Activated CD8-positive, alpha-beta memory T cell treated with anti-CD3 and anti-CD28 coated beads, Interleukin-2, amount 10 ng/mL, durations not matched to agents 7 days and 5 days (primary cell): ENCODE measurements at regions of chr17 and their contacts with region 1.

Region 1: GRCh38 chr17:27332485-27333409 is 38.8 kb downstream of the WSB1 start:
- DNase-seq: peak; percentile 95
- ATAC-seq: peak; percentile 96
- H3K4me3 Mint-ChIP-seq: peak overlapping the region; percentile 76
- H3K27ac Mint-ChIP-seq: peak overlapping the region; percentile 79
- H3K4me1 Mint-ChIP-seq: peaks cover 28% of the 10 kb centered on the region
- H3K27me3 Mint-ChIP-seq: no peaks in the 10 kb centered on the region

Region 2: GRCh38 chr17:27245230-27245696 is 87.5 kb before region 1 on chr17:
- CTCF ChIA-PET with region 1: interaction called, 23 read pairs
- DNase-seq: peak; percentile 72
- ATAC-seq: peak; percentile 82
- H3K4me3 Mint-ChIP-seq: no peak overlapping the region
- H3K27ac Mint-ChIP-seq: no peak overlapping the region
- H3K4me1 Mint-ChIP-seq: peaks cover 33% of the 10 kb centered on the region
- H3K27me3 Mint-ChIP-seq: peaks cover 19% of the 10 kb centered on the region

Region 3: DNA sequence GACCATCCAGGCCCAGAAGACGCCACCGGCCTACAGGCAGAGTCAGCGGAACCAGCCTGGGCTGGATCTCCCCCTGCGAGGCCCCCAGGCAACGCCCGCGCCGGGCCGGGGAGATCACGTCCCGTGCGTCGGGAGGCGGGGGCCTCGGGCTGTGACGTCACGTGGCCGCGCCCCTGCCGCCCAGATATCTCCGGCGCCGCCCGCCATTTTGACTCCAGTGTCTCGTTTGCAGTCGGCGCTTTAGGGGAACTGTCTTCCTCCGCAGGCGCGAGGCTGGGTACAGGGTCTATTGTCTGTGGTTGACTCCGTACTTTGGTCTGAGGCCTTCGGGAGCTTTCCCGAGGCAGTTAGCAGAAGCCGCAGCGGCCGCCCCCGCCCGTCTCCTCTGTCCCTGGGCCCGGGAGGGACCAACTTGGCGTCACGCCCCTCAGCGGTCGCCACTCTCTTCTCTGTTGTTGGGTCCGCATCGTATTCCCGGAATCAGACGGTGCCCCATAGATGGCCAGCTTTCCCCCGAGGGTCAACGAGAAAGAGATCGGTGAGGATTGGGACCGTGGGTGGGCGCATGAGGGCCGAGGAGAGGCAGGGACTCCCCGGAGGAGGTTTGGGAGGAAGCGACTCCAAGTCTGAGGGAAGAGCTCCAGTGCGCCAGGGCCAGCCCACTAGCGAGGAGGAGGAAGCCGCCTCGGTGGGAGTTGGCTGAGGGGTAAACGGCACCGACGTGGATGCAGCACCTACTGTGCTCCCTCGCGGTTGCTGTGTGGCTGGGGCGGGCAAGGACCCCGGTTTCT is 38.7 kb before region 1 on chr17 and contains the start of gene WSB1:
- CTCF ChIA-PET with region 1: interaction called, 20 read pairs
- DNase-seq: peak; percentile 93
- ATAC-seq: peak; percentile 88
- H3K4me3 Mint-ChIP-seq: peak within 1 kb of the TSS; percentile 93
- H3K27ac Mint-ChIP-seq: peak within 1 kb of the TSS; percentile 99
- H3K4me1 Mint-ChIP-seq: peaks cover 35% of the 10 kb centered on the region
- H3K27me3 Mint-ChIP-seq: no peaks in the 10 kb centered on the region
- total RNA-seq, gene WSB1: 109 to 177 TPM

Region 4: DNA sequence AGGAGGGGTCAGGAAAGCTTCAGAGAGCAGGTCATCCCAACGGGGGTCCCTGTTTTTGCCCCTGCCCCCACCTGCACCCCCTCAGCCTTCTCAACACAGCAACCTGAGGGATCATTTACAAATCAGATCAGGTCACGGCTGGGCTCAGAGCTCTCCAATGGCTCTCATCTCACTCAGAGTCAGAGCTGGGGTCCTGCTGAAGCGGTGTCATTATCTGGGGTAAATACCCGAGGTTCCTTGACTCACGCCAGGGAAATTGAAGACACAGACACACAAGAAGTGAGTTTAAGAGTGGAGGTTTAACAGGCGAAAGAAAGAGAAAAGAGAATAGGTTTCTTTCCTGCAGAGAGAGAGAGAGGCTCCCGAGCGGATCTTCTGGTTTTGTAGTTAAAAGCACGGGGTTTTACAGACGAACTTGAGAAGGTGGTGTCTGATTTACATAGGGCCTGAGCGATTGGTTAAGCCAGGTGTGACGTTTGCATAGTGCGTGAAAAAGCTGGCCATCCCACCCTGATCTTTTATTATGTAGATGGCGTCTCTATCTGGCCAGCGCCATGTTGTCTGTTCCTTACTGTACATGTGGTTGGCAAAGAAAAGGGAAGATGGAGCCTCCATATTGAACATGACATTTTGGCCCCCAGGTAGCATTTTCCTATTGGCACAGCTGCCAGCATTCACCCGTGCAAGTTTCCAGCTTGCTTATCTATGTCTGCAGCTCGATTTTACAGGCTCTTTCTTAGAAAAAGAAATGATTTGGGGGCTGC is 12.6 kb after region 1 on chr17:
- CTCF ChIA-PET with region 1: interaction called, 13 read pairs
- DNase-seq: no peak
- ATAC-seq: no peak
- H3K4me3 Mint-ChIP-seq: no peak overlapping the region
- H3K27ac Mint-ChIP-seq: no peak overlapping the region
- H3K4me1 Mint-ChIP-seq: peaks cover 20% of the 10 kb centered on the region
- H3K27me3 Mint-ChIP-seq: no peaks in the 10 kb centered on the region

Region 5: DNA sequence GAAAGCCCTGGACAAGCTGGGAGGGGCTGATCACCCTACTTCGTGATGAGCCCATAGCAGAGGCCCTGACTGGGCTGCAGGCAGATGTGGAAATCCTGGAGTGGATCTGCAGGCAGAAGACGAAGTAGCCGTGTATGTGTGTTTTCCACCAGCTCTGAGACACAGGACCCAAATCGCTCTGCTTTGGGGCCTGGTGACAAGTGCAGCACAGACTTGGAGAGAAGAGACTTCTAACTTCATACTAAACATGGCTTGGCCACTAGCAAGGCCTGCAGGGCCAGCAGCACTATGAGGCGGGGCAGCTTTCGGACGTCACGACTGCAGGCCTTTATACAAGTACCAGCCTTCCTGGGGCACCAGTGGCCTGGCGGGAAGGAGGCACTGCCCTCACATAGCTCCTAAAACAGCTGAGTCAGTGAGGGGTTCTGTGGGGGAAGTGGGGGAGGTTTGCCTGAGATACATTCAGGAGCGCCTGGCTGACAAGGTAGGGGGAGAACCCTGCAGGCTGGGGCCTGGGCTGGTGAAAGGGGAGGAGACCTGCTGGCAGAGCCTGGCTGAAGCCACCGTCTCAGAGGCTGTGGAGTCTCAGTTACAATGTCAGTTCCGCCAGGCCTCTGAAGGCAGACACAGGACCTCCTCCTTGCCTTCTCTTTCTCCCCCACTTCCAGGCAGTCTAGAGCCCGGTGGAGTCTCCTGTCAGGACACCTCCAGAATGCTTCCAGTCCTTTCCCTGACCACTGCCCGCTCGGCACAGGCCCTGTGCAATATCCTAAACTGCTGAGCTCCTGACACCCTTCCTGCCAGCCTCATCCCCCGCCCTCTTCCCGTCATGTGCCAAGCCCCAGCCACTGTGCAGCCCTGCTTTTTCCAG is 34.6 kb after region 1 on chr17:
- CTCF ChIA-PET with region 1: no interaction called
- DNase-seq: no peak
- ATAC-seq: no peak
- H3K4me3 Mint-ChIP-seq: no peak overlapping the region
- H3K27ac Mint-ChIP-seq: no peak overlapping the region
- H3K4me1 Mint-ChIP-seq: no peaks in the 10 kb centered on the region
- H3K27me3 Mint-ChIP-seq: peaks cover 11% of the 10 kb centered on the region

Region 6: DNA sequence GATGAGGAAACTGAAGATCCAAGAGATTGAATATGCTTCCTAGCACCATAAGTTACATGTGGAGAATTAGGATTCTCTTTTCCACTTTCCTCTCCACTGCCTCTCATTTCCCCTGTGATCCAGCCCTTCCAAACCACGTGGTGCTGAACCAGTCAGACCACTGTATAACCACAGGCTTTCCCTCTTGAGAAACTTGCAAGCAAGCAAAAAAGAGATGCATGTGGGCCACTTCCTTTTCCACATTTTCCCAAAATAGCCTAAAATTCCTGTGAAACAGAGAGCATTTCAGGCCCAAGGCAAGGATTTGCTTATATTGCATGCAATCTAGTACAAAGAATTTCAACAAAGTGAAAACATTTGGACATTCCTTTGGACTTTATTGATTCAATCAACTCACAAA is 64.2 kb after region 1 on chr17:
- CTCF ChIA-PET with region 1: no interaction called
- DNase-seq: no peak
- ATAC-seq: no peak
- H3K4me3 Mint-ChIP-seq: no peak overlapping the region
- H3K27ac Mint-ChIP-seq: no peak overlapping the region
- H3K4me1 Mint-ChIP-seq: no peaks in the 10 kb centered on the region
- H3K27me3 Mint-ChIP-seq: peaks cover 50% of the 10 kb centered on the region